Natural killer cell (primary cell): ENCODE measurements at regions of chr11 and their contacts with region 1.

Region 1: DNA sequence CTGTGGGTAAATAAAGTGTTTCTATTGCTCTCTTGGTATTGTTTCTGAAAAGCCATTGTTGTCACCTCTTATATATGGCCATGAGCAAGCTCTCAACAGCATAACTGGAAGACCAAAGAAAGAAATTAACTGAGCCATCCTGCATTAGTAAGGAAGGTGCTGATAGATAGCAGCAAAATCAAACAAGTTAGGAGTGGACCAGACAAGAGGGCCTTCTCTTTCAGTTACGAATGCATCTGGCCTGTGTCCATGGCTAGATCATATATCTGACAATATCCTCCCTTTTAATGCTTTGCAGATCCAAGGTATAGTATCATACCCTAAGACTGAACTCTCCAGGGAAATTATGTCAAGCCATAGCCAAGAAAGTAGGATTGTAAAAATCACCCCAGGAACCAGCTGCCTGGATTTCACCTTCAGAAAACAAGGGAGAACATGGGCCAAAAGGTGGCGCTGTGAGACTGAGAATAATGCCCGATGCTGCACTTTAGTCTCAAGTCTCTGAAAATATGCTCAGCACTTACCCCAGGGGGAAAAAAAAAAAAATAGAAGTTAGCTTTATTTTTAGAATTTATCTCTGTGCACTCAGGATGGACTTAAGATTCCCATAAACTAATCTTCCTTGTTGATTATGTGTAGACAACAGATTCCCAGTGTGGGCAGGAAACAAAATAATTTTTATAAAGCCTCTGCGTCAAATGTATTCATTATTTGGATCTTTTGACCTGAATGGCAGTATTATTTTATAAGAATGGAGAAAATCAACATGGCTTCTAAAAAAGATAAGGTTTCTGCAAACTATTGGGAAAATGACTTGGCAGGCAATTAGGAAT is 415.1 kb downstream of the ETS1 start:
- DNase-seq: peak; percentile 81 to 93
- ATAC-seq: peak; percentile 85 to 94 (median 88)
- H3K4me3 ChIP-seq: no peak overlapping the region
- H3K4me3 Mint-ChIP-seq: no peak overlapping the region
- H3K27ac ChIP-seq: no peak overlapping the region
- H3K27ac Mint-ChIP-seq: no peak overlapping the region
- H3K4me1 ChIP-seq: no peaks in the 10 kb centered on the region
- H3K4me1 Mint-ChIP-seq: peaks cover 8 to 11% of the 10 kb centered on the region in 2 donors
- H3K27me3 ChIP-seq: no peaks in the 10 kb centered on the region
- H3K27me3 Mint-ChIP-seq: peaks cover 0 to 3% of the 10 kb centered on the region in 2 donors
- CTCF ChIP-seq: peak; percentile 97

Region 2: GRCh38 chr11:128776424-128777284 is 604.4 kb after region 1 on chr11:
- intact Hi-C with region 1: loop called (anchors 1 kb)
- DNase-seq: peak in 1 of 2 donors; percentile 80
- ATAC-seq: peak; percentile 59 to 72 (median 67)
- H3K4me3 ChIP-seq: no peak overlapping the region
- H3K4me3 Mint-ChIP-seq: peak overlapping the region; percentile 45
- H3K27ac ChIP-seq: peak overlapping the region; percentile 52
- H3K27ac Mint-ChIP-seq: peak overlapping the region; percentile 94
- H3K4me1 ChIP-seq: peaks cover 61% of the 10 kb centered on the region
- H3K4me1 Mint-ChIP-seq: peaks cover 77 to 87% of the 10 kb centered on the region in 2 donors
- H3K27me3 ChIP-seq: no peaks in the 10 kb centered on the region
- H3K27me3 Mint-ChIP-seq: no peaks in the 10 kb centered on the region
- CTCF ChIP-seq: peak; percentile 62

Region 3: DNA sequence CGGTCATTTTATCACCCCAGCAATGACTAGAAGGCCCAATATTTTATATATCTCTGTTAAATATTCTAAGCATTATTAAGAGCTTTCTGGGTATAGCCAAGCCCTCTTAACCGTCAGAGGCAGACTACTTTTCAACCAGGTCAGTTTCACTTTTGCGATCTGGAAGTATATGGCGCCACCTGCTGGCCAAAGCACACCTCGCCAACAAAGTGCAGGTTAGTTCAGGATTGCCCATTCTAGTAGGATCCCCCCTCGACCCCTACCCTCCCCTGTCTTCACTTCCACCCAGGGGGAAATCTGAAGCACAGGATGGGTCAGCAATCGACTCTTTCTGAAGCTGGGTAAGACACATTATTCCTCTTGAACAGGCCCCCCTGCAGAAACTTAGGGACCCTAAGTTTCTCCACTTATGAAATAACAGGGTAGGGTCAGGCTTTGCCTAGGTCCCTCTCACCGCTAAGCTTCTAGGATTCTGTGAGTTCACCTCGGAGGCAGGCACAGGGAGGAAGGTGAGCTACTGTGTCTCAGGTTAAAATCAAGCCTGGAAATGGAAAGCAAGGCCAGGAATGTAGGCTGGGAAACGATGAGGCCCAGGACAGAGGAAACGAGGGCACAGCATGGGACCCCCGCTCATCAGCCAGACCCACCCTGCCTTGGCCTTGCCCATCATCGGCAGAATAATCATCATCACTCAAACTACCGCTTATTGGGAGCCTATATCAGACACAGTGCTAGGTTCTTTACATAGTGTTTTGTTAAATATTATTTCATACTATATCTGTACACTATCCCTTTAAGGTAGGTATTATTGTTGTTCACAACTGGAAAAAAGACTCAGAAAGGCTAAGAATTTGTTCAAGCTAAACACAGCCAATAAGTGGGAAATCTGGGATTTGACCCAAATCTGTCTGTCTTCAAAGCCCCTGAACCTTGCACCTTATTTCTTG is 659.2 kb after region 1 on chr11:
- intact Hi-C with region 1: loop called (anchors 1 kb)
- DNase-seq: peak; percentile 82 to 94
- ATAC-seq: peak; percentile 86 to 90 (median 88)
- H3K4me3 ChIP-seq: peak overlapping the region; percentile 13
- H3K4me3 Mint-ChIP-seq: peak overlapping the region; percentile 84
- H3K27ac ChIP-seq: peak overlapping the region; percentile 70
- H3K27ac Mint-ChIP-seq: peak overlapping the region; percentile 87 to 88
- H3K4me1 ChIP-seq: peaks cover 16% of the 10 kb centered on the region
- H3K4me1 Mint-ChIP-seq: peaks cover 25 to 36% of the 10 kb centered on the region in 2 donors
- H3K27me3 ChIP-seq: no peaks in the 10 kb centered on the region
- H3K27me3 Mint-ChIP-seq: no peaks in the 10 kb centered on the region
- CTCF ChIP-seq: peak; percentile 95

Region 4: GRCh38 chr11:128848815-128849455 is 676.7 kb after region 1 on chr11:
- intact Hi-C with region 1: loop called (anchors 5 kb)
- DNase-seq: peak; percentile 69 to 79
- ATAC-seq: peak; percentile 79 to 89 (median 87)
- H3K4me3 ChIP-seq: no peak overlapping the region
- H3K4me3 Mint-ChIP-seq: no peak overlapping the region
- H3K27ac ChIP-seq: no peak overlapping the region
- H3K27ac Mint-ChIP-seq: peak overlapping the region; percentile 1 to 12
- H3K4me1 ChIP-seq: peaks cover 12% of the 10 kb centered on the region
- H3K4me1 Mint-ChIP-seq: peaks cover 17 to 19% of the 10 kb centered on the region in 2 donors
- H3K27me3 ChIP-seq: no peaks in the 10 kb centered on the region
- H3K27me3 Mint-ChIP-seq: no peaks in the 10 kb centered on the region
- CTCF ChIP-seq: peak; percentile 92

Region 5: DNA sequence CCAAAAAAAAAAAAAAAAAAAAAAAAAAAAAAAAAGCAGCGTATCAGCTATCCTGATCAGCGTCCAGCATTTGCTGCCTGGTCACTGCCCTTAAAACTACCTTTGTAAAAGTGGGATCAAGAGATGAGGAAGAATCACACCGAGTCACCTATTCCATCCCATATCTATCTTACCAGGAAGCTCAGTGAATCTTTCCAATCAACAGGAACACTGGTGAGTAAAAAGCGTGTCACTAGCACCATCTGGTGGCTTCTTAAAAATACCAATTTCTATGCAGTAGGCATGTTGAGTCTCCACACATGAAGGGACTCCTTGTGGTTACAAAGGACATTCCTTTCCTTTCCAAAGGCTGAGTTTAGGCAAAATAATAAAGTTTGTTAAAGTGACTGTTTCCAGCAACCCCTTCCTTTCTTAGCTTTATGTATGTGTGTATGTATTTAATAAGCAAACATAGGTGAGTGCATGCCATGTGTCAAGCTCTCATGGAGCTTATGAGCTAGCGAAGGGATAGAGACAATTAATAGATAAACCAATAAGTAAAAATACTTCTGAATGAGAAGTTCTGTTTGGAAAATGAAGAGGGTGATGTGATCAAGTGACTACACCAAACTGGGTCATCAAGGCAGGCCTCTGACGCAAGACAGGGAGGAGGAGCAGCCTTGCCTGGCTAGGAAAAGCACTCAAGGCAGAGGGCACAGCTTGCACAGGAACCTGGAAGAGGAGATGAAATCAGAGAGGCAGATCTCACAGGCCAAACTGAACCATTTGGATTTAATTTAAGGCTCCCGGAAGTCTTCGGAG is 784.3 kb after region 1 on chr11:
- intact Hi-C with region 1: loop called (anchors 1 kb)
- DNase-seq: peak in 1 of 2 donors; percentile 70
- ATAC-seq: peak in 2 of 3 donors; percentile 57 to 69
- H3K4me3 ChIP-seq: no peak overlapping the region
- H3K4me3 Mint-ChIP-seq: no peak overlapping the region
- H3K27ac ChIP-seq: no peak overlapping the region
- H3K27ac Mint-ChIP-seq: no peak overlapping the region
- H3K4me1 ChIP-seq: no peaks in the 10 kb centered on the region
- H3K4me1 Mint-ChIP-seq: peaks cover 0 to 6% of the 10 kb centered on the region in 2 donors
- H3K27me3 ChIP-seq: no peaks in the 10 kb centered on the region
- H3K27me3 Mint-ChIP-seq: peaks cover 26 to 45% of the 10 kb centered on the region in 2 donors
- CTCF ChIP-seq: peak; percentile 77